ENCODE measurements at regions of chr10 and their contacts with region 1.

Region 1: GRCh38 chr10:104268716-104269645 is at the start of gene GSTO2:
- H3K4me3 Mint-ChIP-seq: peak within 1 kb of the TSS; percentile 91
- H3K27ac Mint-ChIP-seq: peak within 1 kb of the TSS; percentile 92
- H3K4me1 Mint-ChIP-seq: peaks cover 8% of the 10 kb centered on the region
- H3K27me3 Mint-ChIP-seq: no peaks in the 10 kb centered on the region

Region 2: GRCh38 chr10:103845972-103846371 is 423.0 kb before region 1 on chr10:
- intact Hi-C with region 1: no loop called
- H3K4me3 Mint-ChIP-seq: peak overlapping the region; percentile 17
- H3K27ac Mint-ChIP-seq: peak overlapping the region; percentile 65
- H3K4me1 Mint-ChIP-seq: peaks cover 47% of the 10 kb centered on the region
- H3K27me3 Mint-ChIP-seq: peaks cover 8% of the 10 kb centered on the region

Region 3: GRCh38 chr10:104231784-104232612 is 37.0 kb before region 1 on chr10 and contains the start of gene CFAP43:
- intact Hi-C with region 1: loop called (anchors 1 kb)
- H3K4me3 Mint-ChIP-seq: peak within 1 kb of the TSS; percentile 84
- H3K27ac Mint-ChIP-seq: peak within 1 kb of the TSS; percentile 77
- H3K4me1 Mint-ChIP-seq: peaks cover 10% of the 10 kb centered on the region
- H3K27me3 Mint-ChIP-seq: peaks cover 19% of the 10 kb centered on the region

Region 4: GRCh38 chr10:104246976-104247375 is 22.0 kb before region 1 on chr10:
- intact Hi-C with region 1: loop called (anchors 2 kb)
- H3K4me3 Mint-ChIP-seq: peak overlapping the region; percentile 49
- H3K27ac Mint-ChIP-seq: peak overlapping the region; percentile 92
- H3K4me1 Mint-ChIP-seq: peaks cover 19% of the 10 kb centered on the region
- H3K27me3 Mint-ChIP-seq: no peaks in the 10 kb centered on the region

Region 5: DNA sequence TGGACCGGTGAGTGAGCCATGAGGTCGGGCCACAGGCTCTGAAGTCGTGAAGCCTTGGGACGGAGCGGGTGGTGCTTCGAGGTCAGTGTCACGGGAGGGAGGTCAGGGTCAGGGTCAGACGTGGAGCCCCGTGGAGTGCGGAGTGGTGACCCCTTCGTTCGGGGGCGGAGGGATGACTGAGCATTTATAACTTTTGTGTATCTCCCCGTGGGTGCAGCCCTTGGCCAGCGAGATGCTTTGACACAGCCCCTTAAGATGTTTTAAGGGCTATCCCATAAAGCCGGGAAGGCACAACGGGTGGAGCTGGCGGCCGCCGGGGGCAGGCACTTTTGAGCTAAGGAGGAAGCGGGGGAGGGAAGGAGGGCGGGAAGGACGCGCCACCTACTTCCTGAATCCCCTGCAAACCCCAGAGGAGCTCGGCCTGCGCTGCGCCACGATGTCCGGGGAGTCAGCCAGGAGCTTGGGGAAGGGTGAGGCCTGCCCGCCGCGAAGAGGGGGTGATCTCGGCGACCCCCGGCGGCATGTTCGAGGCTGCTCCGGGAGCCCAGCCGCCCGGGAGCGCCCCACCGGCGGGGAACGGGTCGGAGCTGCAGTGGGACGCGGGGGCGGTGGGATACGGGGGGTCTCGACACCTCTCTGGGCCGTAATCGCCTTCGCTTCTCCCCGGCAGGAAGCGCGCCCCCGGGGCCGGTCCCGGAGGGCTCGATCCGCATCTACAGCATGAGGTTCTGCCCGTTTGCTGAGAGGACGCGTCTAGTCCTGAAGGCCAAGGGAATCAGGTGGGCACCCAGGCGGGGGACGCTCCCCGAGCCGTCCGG is 14.3 kb before region 1 on chr10 and contains the start of gene GSTO1:
- intact Hi-C with region 1: loop called (anchors 2 kb)
- H3K4me3 Mint-ChIP-seq: peak within 1 kb of the TSS; percentile 91
- H3K27ac Mint-ChIP-seq: peak within 1 kb of the TSS; percentile 96
- H3K4me1 Mint-ChIP-seq: peaks cover 49% of the 10 kb centered on the region
- H3K27me3 Mint-ChIP-seq: no peaks in the 10 kb centered on the region